ENCODE measurements at regions of chr14 and their contacts with region 1.

Region 1: DNA sequence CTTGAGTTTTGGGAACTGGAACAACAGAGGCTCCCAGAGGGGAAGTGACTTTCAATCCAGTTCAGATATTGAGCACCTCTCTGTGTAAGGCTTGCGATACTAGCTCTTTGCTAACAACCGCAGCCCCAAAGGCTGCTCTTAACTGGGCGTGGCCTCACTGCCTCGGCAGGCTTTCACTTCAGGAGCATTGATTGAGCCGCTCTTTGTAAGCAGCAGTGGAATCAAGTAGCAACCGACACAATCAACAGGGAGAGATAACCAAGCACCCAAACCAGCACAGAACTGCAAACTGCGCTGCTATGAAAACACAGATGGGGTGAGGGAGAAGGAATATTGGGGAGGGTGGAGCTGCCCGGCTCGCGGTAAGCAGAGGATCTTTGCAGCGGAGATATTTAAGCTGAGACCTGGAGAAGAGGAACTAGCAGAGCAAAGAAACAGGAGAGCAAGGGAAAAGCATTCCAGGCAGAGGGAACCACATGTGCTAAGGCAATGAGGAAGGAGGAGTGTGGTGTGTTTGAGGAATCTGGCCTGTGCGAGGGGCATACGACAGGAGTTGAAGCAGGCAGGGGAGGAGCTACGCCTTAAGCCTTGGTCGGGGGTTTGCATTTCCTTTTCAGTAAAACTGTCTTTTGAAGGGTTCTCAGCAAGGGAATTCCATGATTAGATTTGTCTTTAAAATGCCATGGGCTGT is 17.3 kb upstream of the YY1 start:
- DNase-seq: peak; percentile 84
- ATAC-seq: peak; percentile 93
- H3K4me3 Mint-ChIP-seq: no peak overlapping the region
- H3K27ac Mint-ChIP-seq: no peak overlapping the region
- H3K4me1 Mint-ChIP-seq: peaks cover 7% of the 10 kb centered on the region
- H3K27me3 Mint-ChIP-seq: no peaks in the 10 kb centered on the region

Region 2: DNA sequence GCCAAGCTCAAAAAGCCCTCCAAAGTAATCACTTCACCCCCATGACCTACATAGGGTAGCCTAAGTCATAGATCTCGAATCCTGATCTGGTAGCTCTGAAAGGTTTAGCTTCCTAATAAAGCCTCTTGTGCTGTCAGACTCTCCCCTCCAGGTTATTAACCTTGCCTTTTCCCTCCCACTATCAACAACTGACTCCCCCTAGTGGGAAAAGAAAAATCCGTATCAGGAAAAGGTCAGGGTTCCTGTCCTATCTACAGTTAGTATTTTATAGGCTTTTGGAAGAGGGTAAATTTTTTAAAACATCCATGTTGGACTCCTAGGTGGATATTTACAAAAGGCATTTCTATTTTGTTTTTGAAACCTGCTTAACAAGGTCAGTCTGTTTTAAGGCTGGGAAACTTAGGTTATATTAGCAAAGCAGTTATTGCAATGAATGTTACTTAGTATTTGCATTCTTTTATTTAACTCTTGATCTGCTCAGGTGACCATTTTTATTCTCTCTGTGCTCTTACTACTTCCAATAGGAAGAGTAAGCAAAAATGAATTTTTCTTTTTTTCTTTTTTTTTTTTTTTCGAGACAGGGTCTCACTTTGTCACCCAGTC is 25.2 kb after region 1 on chr14:
- CTCF ChIA-PET with region 1: interaction called, 31 read pairs
- POLR2A ChIA-PET with region 1: interaction called, 3 read pairs
- intact Hi-C with region 1: no loop called
- DNase-seq: no peak
- ATAC-seq: peak; percentile 61
- H3K4me3 Mint-ChIP-seq: no peak overlapping the region
- H3K27ac Mint-ChIP-seq: peak overlapping the region; percentile 84
- H3K4me1 Mint-ChIP-seq: peaks cover 74% of the 10 kb centered on the region
- H3K27me3 Mint-ChIP-seq: no peaks in the 10 kb centered on the region